HEK293T (cell line): ENCODE measurements at regions of chr4 and their contacts with region 1.

Region 1: DNA sequence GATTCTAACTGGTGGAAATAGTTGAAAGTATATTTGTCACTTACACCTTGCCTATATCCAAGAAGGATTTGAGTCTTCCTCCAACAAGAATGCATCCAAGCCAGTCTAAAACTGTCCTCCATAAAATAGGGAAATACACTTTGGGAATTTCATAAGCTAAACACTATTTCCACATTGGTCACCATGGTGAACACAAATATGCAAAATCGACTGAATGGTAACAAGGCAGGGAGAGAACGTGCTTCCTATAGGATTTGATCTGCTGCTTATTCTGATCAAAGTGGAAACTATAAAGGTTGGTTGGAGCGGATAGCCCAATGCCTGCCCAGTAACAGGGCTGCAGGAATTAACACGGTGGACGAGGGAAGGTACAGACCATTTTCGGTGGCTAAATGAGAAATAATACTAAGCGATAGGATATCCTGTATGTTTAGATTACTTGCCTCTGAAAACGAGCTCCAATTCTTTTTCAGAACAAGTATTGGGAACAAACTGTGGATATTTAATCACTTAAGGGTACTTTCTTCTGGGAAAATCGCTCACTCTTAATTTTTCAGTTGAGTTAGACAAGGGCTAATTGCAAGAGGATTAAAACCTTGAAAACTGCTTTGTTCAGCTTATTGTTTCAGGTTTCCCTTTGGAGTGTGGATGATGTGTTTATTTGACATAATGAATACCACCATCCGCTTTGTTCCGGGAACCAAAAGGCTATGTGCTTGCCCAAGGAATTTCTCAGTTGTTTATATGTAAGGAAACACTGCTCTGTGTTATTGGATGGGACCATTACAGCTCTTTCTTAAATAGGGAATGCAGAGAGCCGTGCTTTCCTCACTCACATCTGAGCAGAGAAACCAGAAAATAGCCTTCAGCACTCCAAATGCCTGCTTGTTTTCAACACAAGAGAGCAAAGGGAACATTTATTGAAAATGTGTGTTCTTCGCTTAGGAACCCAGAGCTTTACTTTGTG is 194.4 kb downstream of the CBR4 start:
- DNase-seq: no peak

Region 2: DNA sequence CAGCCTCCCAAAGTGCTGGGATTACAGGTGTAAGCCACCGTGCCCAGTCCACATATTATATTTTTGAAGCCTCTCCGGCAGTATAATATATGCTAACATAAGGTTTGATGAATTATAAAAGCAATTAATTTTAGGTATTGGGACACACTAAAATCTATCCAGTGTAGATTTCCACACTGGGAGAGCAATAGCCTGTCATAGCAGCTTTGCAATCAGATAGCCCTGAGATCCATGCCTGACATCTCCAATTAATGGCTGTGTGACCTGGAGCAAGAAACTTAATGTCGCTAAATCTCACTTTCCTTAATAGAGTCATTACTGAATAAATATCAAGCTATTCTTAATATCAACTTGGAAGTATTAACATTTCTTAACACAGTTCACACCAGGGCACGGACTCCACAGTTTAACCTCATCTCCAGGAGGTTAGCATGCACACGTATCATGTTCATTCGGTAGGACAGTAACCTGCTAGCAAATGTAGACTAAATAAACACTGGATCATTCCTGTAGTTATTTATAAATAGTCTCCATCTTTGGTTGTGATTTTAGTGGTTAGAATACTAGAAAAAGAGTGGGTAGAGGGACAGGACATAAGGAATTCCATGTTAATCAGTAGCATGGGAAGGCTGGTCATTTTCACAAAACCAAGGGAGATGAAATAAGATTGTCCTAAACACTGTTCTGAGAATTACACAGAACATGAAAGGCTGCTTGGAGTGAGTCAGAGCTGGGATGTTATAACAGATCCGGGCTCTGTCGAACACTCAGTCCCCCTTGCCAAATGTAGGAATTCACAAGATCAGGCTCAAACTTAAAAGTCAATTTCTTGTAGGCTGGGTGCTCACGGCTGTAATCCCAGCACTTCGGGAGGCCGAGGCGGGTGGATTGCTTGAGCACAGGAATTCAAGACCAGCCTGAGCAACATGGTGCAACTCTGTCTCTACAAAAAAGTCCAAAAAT is 64.1 kb before region 1 on chr4:
- CTCF ChIA-PET with region 1: no interaction called
- POLR2A ChIA-PET with region 1: no interaction called
- DNase-seq: no peak

Region 3: GRCh38 chr4:168831919-168832762 is 16.5 kb after region 1 on chr4:
- CTCF ChIA-PET with region 1: interaction called, 3 read pairs
- POLR2A ChIA-PET with region 1: interaction called, 20 read pairs
- DNase-seq: peak; percentile 80

Region 4: DNA sequence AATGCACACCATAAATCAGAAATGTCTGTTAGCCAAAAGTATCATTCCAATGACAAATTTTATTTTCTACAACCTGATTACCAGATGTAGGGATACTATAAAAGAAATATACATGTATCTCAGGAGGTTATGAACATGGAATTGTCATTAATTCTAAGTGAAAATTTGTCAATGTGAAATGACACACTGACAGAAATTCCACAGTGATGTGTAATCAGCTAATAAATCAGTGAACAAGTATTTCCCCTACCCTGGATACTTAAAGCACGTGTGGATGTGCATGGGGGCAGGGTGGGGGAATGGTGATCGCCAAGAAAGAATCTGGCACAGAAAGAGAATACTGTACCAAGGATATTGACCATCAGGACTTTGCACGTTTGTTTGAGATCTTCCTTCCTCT is 331.5 kb after region 1 on chr4:
- CTCF ChIA-PET with region 1: no interaction called
- POLR2A ChIA-PET with region 1: no interaction called
- DNase-seq: no peak